Activated CD8-positive, alpha-beta T cell treated with anti-CD3 and anti-CD28 coated beads, Interleukin-2, amount 10 ng/mL, durations not matched to agents 7 days and 5 days (primary cell): ENCODE measurements at regions of chr22 and their contacts with region 1.

Region 1: GRCh38 chr22:17171313-17172171 is 12.5 kb upstream of the HDHD5 start:
- DNase-seq: peak; percentile 84
- ATAC-seq: peak; percentile 96
- H3K4me3 Mint-ChIP-seq: peak overlapping the region; percentile 78
- H3K27ac Mint-ChIP-seq: peak overlapping the region; percentile 71
- H3K4me1 Mint-ChIP-seq: peaks cover 13% of the 10 kb centered on the region
- H3K27me3 Mint-ChIP-seq: no peaks in the 10 kb centered on the region

Region 2: DNA sequence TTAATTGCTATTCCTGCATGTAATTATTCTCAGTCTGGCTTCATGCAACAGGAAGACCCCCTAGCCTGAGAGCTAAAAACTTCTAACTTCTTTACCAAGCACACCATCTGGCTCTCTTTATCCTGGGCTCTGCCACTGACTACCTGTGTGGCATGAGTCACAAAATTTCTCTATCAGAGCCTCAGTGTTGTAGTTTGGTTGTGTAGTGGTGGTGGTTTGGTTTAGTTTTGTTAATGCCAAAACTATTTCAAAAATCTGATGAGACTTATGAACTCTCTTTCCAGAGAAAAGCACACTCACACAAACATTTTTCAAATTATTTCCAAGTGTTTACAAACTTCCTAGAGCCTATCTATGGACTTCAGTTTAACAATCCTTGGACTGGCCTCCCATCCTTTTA is 94.3 kb before region 1 on chr22:
- CTCF ChIA-PET with region 1: interaction called, 87 read pairs
- POLR2A ChIA-PET with region 1: interaction called, 4 read pairs
- DNase-seq: no peak
- ATAC-seq: no peak
- H3K4me3 Mint-ChIP-seq: no peak overlapping the region
- H3K27ac Mint-ChIP-seq: no peak overlapping the region
- H3K4me1 Mint-ChIP-seq: peaks cover 16% of the 10 kb centered on the region
- H3K27me3 Mint-ChIP-seq: peaks cover 23% of the 10 kb centered on the region

Region 3: GRCh38 chr22:17095538-17095937 is 76.0 kb before region 1 on chr22:
- CTCF ChIA-PET with region 1: interaction called, 11 read pairs
- POLR2A ChIA-PET with region 1: no interaction called
- DNase-seq: no peak
- ATAC-seq: no peak
- H3K4me3 Mint-ChIP-seq: no peak overlapping the region
- H3K27ac Mint-ChIP-seq: no peak overlapping the region
- H3K4me1 Mint-ChIP-seq: peaks cover 83% of the 10 kb centered on the region
- H3K27me3 Mint-ChIP-seq: no peaks in the 10 kb centered on the region

Region 4: GRCh38 chr22:17131686-17132085 is 39.9 kb before region 1 on chr22:
- CTCF ChIA-PET with region 1: interaction called, 10 read pairs
- POLR2A ChIA-PET with region 1: no interaction called
- DNase-seq: no peak
- ATAC-seq: no peak
- H3K4me3 Mint-ChIP-seq: no peak overlapping the region
- H3K27ac Mint-ChIP-seq: no peak overlapping the region
- H3K4me1 Mint-ChIP-seq: peaks cover 2% of the 10 kb centered on the region
- H3K27me3 Mint-ChIP-seq: peaks cover 2% of the 10 kb centered on the region

Region 5: GRCh38 chr22:17191163-17191784 is 19.7 kb after region 1 on chr22:
- CTCF ChIA-PET with region 1: interaction called, 13 read pairs
- POLR2A ChIA-PET with region 1: no interaction called
- DNase-seq: no peak
- ATAC-seq: no peak
- H3K4me3 Mint-ChIP-seq: no peak overlapping the region
- H3K27ac Mint-ChIP-seq: no peak overlapping the region
- H3K4me1 Mint-ChIP-seq: no peaks in the 10 kb centered on the region
- H3K27me3 Mint-ChIP-seq: no peaks in the 10 kb centered on the region

Region 6: DNA sequence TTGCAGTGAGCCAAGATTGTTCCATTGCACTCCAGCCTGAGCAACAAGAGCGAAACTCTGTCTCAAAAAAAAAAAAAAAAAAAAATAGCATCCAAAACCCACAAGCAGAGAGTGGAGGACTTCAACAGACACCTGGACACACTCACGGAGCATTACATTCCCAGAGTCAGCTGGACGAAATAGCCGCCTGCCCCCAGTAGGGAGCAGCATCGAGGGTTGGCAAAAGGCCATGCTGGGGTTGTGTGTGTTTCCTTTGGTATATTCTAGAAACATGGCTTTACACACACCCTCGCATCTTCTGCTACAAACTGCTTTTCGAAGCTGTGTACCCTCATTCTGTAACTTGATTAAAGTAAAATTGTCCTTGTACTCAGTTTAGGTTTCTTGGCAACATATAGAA is 42.4 kb after region 1 on chr22:
- CTCF ChIA-PET with region 1: interaction called, 21 read pairs
- POLR2A ChIA-PET with region 1: interaction called, 6 read pairs
- DNase-seq: peak; percentile 56
- ATAC-seq: no peak
- H3K4me3 Mint-ChIP-seq: no peak overlapping the region
- H3K27ac Mint-ChIP-seq: peak overlapping the region; percentile 60
- H3K4me1 Mint-ChIP-seq: peaks cover 35% of the 10 kb centered on the region
- H3K27me3 Mint-ChIP-seq: no peaks in the 10 kb centered on the region

Region 7: GRCh38 chr22:17501679-17502285 is 330.2 kb after region 1 on chr22:
- CTCF ChIA-PET with region 1: interaction called, 91 read pairs
- POLR2A ChIA-PET with region 1: interaction called, 7 read pairs
- DNase-seq: peak; percentile 54
- ATAC-seq: peak; percentile 65
- H3K4me3 Mint-ChIP-seq: no peak overlapping the region
- H3K27ac Mint-ChIP-seq: no peak overlapping the region
- H3K4me1 Mint-ChIP-seq: no peaks in the 10 kb centered on the region
- H3K27me3 Mint-ChIP-seq: peaks cover 2% of the 10 kb centered on the region